GM12878 (cell line): ENCODE measurements at regions of chr3 and their contacts with region 1.

Region 1: GRCh38 chr3:69691860-69692259 is 47.4 kb upstream of the MITF start:
- DNase-seq: no peak
- ATAC-seq: no peak
- H3K4me3 ChIP-seq: no peak overlapping the region
- H3K27ac ChIP-seq: no peak overlapping the region
- H3K4me1 ChIP-seq: no peaks in the 10 kb centered on the region
- H3K27me3 ChIP-seq: no peaks in the 10 kb centered on the region
- CTCF ChIP-seq: no peak
- EP300 ChIP-seq: no peak
- POLR2A ChIP-seq: no peak
- RAD21 ChIP-seq: no peak

Region 2: DNA sequence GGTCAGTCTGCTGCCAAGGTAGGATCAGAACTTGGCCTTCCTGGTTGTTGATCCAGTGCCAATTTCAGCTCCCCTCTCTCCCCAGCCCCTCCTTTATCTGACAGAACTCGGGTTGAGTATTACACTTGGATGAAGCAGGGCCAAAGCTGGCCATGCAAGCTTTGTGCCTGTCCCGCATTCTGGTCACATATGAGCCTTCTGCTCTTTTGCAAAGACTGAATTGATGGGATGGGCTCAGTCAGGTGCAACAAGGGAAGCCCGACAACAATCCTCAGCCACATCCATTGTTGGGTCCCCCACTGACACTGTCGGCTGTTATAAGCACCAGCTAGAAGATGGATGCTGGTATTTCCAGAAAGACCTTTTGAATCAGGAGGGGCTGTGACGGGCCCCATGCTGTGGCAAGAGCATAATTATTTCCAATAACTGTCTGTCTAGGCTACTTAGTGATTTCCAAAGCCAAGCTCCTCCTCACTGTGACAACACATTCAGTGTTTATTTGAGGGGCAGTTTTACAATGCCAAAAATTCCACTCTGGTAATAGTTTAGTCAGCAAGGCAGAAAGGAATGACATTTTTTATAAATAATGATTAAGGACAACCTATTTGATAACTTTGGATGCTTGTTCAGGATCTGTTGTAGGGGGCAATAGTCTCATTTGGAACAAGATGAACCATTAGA is 159.2 kb before region 1 on chr3:
- CTCF ChIA-PET with region 1: no interaction called
- POLR2A ChIA-PET with region 1: no interaction called
- RAD21 ChIA-PET with region 1: no interaction called
- SMC1A ChIA-PET with region 1: no interaction called
- in situ Hi-C with region 1: no loop called
- intact Hi-C with region 1: no loop called
- DNase-seq: no peak
- ATAC-seq: no peak
- H3K4me3 ChIP-seq: no peak overlapping the region
- H3K27ac ChIP-seq: no peak overlapping the region
- H3K4me1 ChIP-seq: no peaks in the 10 kb centered on the region
- H3K27me3 ChIP-seq: no peaks in the 10 kb centered on the region; a peak in 1 of 4 replicates
- CTCF ChIP-seq: no peak
- EP300 ChIP-seq: no peak
- POLR2A ChIP-seq: no peak
- RAD21 ChIP-seq: no peak

Region 3: DNA sequence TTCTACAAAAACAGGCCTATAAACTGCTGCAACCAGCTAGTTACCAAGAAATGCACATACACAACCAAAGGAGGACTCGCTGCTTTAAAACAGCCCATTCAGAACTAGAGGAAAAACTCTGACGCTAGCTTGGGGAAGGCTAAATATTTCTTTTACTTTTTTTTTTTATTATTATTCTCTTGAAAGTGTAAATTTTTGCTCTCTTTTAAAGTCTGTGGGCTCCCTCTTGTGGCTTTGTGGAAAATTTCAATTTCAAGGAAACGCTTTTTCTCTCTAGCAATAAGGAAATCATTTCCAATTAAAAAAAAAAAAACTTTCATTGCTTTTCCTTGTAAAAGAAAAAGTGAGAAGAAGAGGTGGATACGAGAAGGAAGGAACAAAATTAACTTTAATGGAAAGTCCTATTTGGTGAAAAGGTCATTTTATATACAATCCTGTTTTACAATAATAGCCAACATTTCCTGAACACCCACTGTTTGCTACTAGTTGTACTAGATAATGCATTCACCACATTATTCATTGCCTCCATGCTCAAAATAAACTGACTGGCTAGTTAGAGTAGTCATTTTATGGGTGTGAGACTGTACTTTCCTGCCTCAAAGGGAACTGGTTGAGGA is 256.5 kb after region 1 on chr3:
- CTCF ChIA-PET with region 1: interaction called, 3 read pairs
- POLR2A ChIA-PET with region 1: no interaction called
- RAD21 ChIA-PET with region 1: no interaction called
- SMC1A ChIA-PET with region 1: no interaction called
- in situ Hi-C with region 1: no loop called
- intact Hi-C with region 1: loop called (anchors 5 kb)
- DNase-seq: no peak
- ATAC-seq: no peak
- H3K4me3 ChIP-seq: no peak overlapping the region
- H3K27ac ChIP-seq: no peak overlapping the region
- H3K4me1 ChIP-seq: no peaks in the 10 kb centered on the region
- H3K27me3 ChIP-seq: no peaks in the 10 kb centered on the region; a peak in 1 of 4 replicates
- CTCF ChIP-seq: peak; percentile 33 to 41 (median 41); a peak in 5 of 6 replicates
- EP300 ChIP-seq: no peak
- POLR2A ChIP-seq: no peak
- RAD21 ChIP-seq: peak; percentile 55